ENCODE measurements at regions of chr2 and their contacts with region 1.

Region 1: GRCh38 chr2:61694312-61695274 is 156.4 kb upstream of the XPO1 start:
- DNase-seq: peak; percentile 97
- ATAC-seq: peak; percentile 100

Region 2: DNA sequence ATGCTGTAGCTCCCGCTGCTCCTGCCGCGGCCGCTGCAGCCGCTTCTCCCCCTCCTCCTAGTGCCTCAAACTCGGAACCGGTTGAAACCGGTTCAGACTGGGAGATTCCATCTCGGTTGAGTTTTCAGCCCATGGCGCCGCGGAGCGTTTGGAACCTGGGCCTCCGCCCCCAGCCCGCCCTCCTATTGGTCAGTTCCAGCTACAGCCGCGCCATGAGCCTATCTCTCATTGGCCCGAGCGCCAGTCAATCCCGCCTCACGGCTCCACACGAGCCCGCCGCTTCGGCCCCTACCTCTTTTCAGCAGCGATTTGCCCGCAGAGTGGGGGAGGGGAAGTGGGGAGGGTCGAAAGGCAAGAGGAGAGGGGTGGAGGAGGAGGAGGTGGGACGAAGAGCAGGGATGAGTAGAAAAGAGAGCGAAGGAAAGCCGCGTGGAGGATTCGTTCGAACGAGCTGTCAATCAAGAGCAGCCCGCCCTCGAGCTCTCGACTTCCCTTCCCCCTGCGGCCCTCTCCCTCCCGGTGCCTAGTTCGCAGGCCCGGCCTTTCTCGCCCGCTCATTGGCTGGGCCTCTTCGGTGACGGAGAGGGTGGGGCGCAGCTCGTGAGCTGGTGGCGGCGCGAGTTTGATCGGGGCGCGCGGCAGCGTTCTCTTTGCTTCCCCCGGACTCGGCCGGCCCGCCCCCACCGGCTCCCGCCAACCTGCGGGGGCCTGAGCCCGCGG is 156.2 kb before region 1 on chr2 and contains the start of gene XPO1:
- intact Hi-C with region 1: loop called (anchors 10 kb)
- DNase-seq: peak; percentile 100
- ATAC-seq: peak; percentile 94
- total RNA-seq, gene XPO1: 57.2 TPM

Region 3: DNA sequence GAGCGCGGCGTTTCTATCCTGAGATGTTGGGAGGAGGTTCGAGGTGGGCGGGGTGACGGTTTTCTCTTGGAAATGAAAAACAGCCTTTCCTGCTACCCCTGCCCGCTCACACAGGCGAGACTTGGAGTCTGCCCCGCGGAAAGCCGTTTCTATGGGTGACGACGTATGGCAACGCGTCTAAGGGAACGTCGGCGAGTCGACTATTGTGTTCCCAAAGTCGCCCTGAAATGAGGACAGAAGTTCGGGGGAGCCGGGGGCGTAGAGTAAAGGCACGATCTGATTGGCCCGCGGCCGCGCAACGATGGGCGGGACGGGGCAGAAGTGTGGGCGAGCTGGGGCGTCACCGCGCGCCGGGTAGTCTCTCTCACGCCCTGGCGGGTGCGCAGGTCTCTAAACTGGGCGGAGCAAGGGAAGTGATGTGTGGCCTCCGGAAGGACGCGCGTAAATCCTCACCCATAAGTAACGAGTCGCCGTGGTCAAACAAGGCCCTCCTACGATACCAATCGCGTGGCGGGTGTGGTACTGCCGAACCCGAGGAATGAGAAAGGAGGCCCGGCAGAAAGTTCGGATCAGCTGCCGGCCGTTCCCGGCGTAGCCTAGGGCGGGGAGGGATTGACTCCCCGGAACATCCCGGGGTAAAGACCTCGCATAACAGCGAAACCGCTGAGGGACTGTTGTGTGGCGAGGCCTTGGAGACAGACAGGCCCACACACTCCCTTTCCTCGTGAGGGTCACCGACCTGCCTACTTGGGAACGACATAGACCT is 69.6 kb after region 1 on chr2:
- intact Hi-C with region 1: loop called (anchors 2 kb)
- DNase-seq: peak; percentile 99
- ATAC-seq: peak; percentile 99

Measured in Right ventricle myocardium superior (tissue), 1 donor.